AG04450 (cell line): ENCODE measurements at regions of chr5 and their contacts with region 1.

Region 1: GRCh38 chr5:83927140-83927733 is 206.6 kb upstream of the HAPLN1 start:
- DNase-seq: no peak
- H3K4me3 ChIP-seq: no peak overlapping the region
- H3K27ac ChIP-seq: no peak overlapping the region
- H3K27me3 ChIP-seq: no peaks in the 10 kb centered on the region
- CTCF ChIP-seq: peak; percentile 77

Region 2: GRCh38 chr5:83608122-83608521 is 319.1 kb before region 1 on chr5:
- CTCF ChIA-PET with region 1: no interaction called
- POLR2A ChIA-PET with region 1: no interaction called
- DNase-seq: no peak
- H3K4me3 ChIP-seq: no peak overlapping the region
- H3K27ac ChIP-seq: no peak overlapping the region
- H3K27me3 ChIP-seq: no peaks in the 10 kb centered on the region
- CTCF ChIP-seq: peak; percentile 65

Region 3: GRCh38 chr5:83914199-83914598 is 13.0 kb before region 1 on chr5:
- CTCF ChIA-PET with region 1: interaction called, 47 read pairs
- POLR2A ChIA-PET with region 1: no interaction called
- DNase-seq: no peak
- H3K4me3 ChIP-seq: no peak overlapping the region
- H3K27ac ChIP-seq: no peak overlapping the region
- H3K27me3 ChIP-seq: no peaks in the 10 kb centered on the region
- CTCF ChIP-seq: no peak

Region 4: GRCh38 chr5:83947763-83948162 is 20.5 kb after region 1 on chr5:
- CTCF ChIA-PET with region 1: interaction called, 20 read pairs
- POLR2A ChIA-PET with region 1: no interaction called
- DNase-seq: no peak
- H3K4me3 ChIP-seq: no peak overlapping the region
- H3K27ac ChIP-seq: no peak overlapping the region
- H3K27me3 ChIP-seq: no peaks in the 10 kb centered on the region
- CTCF ChIP-seq: no peak

Region 5: DNA sequence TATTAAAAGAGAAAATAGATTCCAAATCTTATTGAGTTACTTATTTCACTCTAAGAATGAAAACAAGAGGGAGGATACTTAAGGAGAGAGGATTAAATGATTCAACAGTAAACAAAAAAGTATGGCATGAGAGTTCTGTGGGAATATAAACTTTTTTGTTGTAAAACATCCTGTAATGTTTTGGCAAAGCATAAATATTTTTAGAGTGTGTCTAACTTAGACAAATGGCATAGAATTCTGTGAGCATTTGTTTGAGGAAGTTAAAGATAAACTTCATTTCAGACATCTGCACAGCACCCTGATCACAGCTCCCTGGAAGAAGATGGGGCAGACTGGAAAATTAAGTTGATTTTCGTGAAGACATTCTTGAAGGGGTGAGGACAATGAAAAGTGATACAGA is 40.2 kb after region 1 on chr5:
- CTCF ChIA-PET with region 1: interaction called, 11 read pairs
- POLR2A ChIA-PET with region 1: no interaction called
- DNase-seq: peak; percentile 29
- H3K4me3 ChIP-seq: no peak overlapping the region
- H3K27ac ChIP-seq: no peak overlapping the region
- H3K27me3 ChIP-seq: no peaks in the 10 kb centered on the region
- CTCF ChIP-seq: no peak